Activated B cell treated with CpG ODN at 0.5 μM for 24 hours (primary cell): ENCODE measurements at regions of chr4 and their contacts with region 1.

Region 1: DNA sequence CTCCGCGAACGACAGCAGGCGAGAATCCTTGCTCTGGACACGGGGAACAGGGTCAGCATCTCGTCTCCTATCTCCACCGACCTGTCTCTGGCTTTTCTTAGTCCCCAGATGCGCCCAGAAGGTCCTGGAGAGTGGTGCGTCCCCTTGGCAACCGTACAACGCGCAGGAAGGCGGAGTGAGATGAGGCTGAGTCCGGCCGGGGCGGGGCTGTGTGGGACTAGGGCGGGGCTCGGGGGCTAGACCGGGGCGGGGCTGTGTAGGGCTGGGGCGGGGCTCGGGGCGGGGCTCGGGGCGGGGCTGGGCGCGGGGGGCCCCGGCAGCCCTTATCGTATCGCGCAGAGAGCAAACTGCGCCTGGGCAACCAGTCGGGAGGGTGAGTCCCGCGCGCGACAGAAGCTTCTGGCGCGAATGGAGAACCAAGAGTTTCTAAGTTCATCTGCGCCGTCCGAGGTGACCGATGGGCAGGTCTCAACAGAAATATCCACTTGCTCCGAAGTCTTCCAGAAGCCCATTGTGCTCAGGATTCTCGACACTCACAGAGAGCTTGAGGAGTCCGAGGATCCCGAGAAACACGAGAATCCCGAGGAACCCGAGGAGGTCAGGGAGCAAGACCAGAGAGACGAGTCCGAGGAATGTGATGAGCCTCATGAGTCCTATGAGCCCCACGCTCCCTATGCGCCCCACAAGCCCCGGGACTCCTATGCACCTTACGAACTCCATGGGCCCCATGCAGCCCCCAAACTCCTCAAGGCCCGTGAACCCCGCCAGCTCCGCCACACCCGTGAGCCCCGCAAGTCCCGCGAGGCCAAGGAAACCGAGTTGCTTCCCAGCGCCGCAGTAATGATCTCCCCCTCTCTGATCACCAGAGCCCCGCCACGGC is 24.9 kb downstream of the ARL9 start:
- DNase-seq: peak; percentile 72
- ATAC-seq: peak; percentile 99
- H3K4me3 Mint-ChIP-seq: peak overlapping the region; percentile 68
- H3K27ac Mint-ChIP-seq: no peak overlapping the region
- H3K4me1 Mint-ChIP-seq: peaks cover 4% of the 10 kb centered on the region
- H3K27me3 Mint-ChIP-seq: peaks cover 12% of the 10 kb centered on the region
- CTCF ChIP-seq: no peak

Region 2: GRCh38 chr4:56387023-56388001 is 143.2 kb before region 1 on chr4 and contains the start of gene AASDH:
- CTCF ChIA-PET with region 1: no interaction called
- POLR2A ChIA-PET with region 1: interaction called, 3 read pairs
- intact Hi-C with region 1: loop called (anchors 1 kb)
- DNase-seq: peak; percentile 96
- ATAC-seq: peak; percentile 90
- H3K4me3 Mint-ChIP-seq: peak within 1 kb of the TSS; percentile 93
- H3K27ac Mint-ChIP-seq: peak within 1 kb of the TSS; percentile 99
- H3K4me1 Mint-ChIP-seq: peaks cover 27% of the 10 kb centered on the region
- H3K27me3 Mint-ChIP-seq: no peaks in the 10 kb centered on the region
- CTCF ChIP-seq: no peak
- total RNA-seq, gene AASDH: 12.8 and 14.2 TPM in 2 replicates

Region 3: DNA sequence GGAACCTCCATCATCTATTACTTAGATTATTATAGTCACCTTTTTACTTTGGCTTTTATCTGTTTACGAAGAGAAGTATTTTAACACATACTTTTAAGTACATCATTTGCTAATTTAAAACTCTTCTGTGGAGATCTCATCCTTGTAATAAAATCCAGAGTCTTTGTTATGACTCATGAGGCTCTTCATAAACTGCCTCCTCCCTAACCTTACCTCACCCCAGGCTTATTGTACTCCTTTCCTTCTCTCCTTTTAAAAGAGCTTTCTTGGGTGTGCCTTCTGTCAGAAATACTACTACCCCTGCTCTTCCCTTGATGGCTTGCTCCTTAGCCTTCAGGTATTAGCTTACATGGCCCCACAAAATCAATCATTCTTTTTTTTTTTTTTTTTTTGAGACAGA is 18.3 kb before region 1 on chr4:
- CTCF ChIA-PET with region 1: no interaction called
- POLR2A ChIA-PET with region 1: no interaction called
- intact Hi-C with region 1: no loop called
- DNase-seq: no peak
- ATAC-seq: no peak
- H3K4me3 Mint-ChIP-seq: no peak overlapping the region
- H3K27ac Mint-ChIP-seq: no peak overlapping the region
- H3K4me1 Mint-ChIP-seq: no peaks in the 10 kb centered on the region
- H3K27me3 Mint-ChIP-seq: peaks cover 6% of the 10 kb centered on the region
- CTCF ChIP-seq: no peak

Region 4: GRCh38 chr4:56544573-56545131 is 14.1 kb after region 1 on chr4:
- CTCF ChIA-PET with region 1: interaction called, 3 read pairs
- POLR2A ChIA-PET with region 1: no interaction called
- intact Hi-C with region 1: loop called (anchors 1 kb)
- DNase-seq: peak; percentile 89
- ATAC-seq: peak; percentile 99
- H3K4me3 Mint-ChIP-seq: peak overlapping the region; percentile 71
- H3K27ac Mint-ChIP-seq: no peak overlapping the region
- H3K4me1 Mint-ChIP-seq: peaks cover 10% of the 10 kb centered on the region
- H3K27me3 Mint-ChIP-seq: peaks cover 14% of the 10 kb centered on the region
- CTCF ChIP-seq: peak; percentile 93

Region 5: GRCh38 chr4:56757821-56758411 is 227.4 kb after region 1 on chr4:
- CTCF ChIA-PET with region 1: no interaction called
- POLR2A ChIA-PET with region 1: no interaction called
- intact Hi-C with region 1: loop called (anchors 5 kb)
- DNase-seq: peak; percentile 55
- ATAC-seq: peak; percentile 96
- H3K4me3 Mint-ChIP-seq: peak overlapping the region; percentile 81
- H3K27ac Mint-ChIP-seq: peak overlapping the region; percentile 96
- H3K4me1 Mint-ChIP-seq: peaks cover 63% of the 10 kb centered on the region
- H3K27me3 Mint-ChIP-seq: no peaks in the 10 kb centered on the region
- CTCF ChIP-seq: no peak

Region 6: DNA sequence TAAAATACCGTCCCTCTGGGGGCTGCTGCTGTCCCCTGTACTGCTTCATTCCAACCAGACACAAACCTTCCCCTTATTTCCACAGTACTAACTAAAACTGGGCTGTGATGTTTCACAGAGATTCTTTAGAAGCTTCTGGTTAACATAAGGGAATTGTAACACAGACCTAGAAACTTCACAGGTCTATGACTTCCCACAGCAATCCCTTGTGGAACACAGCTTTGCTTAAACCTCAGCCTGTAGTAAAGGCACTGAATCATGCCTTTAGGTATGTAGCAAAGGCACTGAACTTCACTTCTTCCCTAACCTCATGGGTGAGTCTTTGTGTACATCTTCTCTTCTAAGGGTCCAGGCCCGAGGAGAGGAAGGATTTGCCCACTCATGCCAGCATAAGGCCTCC is 241.6 kb after region 1 on chr4:
- CTCF ChIA-PET with region 1: no interaction called
- POLR2A ChIA-PET with region 1: no interaction called
- intact Hi-C with region 1: no loop called
- DNase-seq: no peak
- ATAC-seq: no peak
- H3K4me3 Mint-ChIP-seq: no peak overlapping the region
- H3K27ac Mint-ChIP-seq: no peak overlapping the region
- H3K4me1 Mint-ChIP-seq: peaks cover 7% of the 10 kb centered on the region
- H3K27me3 Mint-ChIP-seq: no peaks in the 10 kb centered on the region
- CTCF ChIP-seq: no peak

Region 7: GRCh38 chr4:56907489-56908205 is 377.1 kb after region 1 on chr4 and contains the start of gene REST:
- CTCF ChIA-PET with region 1: no interaction called
- POLR2A ChIA-PET with region 1: no interaction called
- intact Hi-C with region 1: loop called (anchors 1 kb)
- DNase-seq: peak; percentile 90
- ATAC-seq: peak; percentile 59
- H3K4me3 Mint-ChIP-seq: peak within 1 kb of the TSS; percentile 91
- H3K27ac Mint-ChIP-seq: peak within 1 kb of the TSS; percentile 77
- H3K4me1 Mint-ChIP-seq: peaks cover 41% of the 10 kb centered on the region
- H3K27me3 Mint-ChIP-seq: no peaks in the 10 kb centered on the region
- CTCF ChIP-seq: no peak
- total RNA-seq, gene REST: 48.3 and 49.1 TPM in 2 replicates